ENCODE measurements at regions of chr11 and their contacts with region 1.

Region 1: GRCh38 chr11:104410336-104410735 is 246.4 kb upstream of the PDGFD start:
- DNase-seq: no peak
- ATAC-seq: no peak

Region 2: GRCh38 chr11:104175769-104176168 is 234.6 kb before region 1 on chr11:
- intact Hi-C with region 1: no loop called
- DNase-seq: no peak
- ATAC-seq: no peak

Region 3: GRCh38 chr11:104432508-104432907 is 22.2 kb after region 1 on chr11:
- intact Hi-C with region 1: loop called (anchors 2 kb)
- DNase-seq: no peak
- ATAC-seq: no peak